PC-3 (cell line): ENCODE measurements at regions of chr4 and their contacts with region 1.

Region 1: DNA sequence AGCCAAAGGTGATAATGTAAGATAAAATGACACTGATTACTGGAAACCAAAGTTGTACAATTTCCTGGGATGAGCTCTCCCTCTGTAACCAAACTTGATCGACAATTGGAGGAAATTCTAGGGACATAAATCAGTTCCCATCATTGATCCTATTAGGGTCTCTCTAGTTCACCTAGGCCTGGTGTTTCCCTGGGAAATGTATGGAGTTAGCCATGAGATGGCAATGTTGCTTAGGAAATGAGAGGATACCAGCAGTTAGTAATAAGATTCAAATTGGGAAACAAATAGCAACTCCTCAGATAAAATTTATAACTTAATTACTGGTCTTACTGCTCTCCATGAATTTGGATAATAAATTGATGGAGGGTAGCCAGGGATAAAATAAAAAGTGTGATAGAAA is 52.2 kb downstream of the SPATA18 start:
- DNase-seq: peak; percentile 81
- ATAC-seq: peak; percentile 65
- H3K4me3 ChIP-seq: 0 out of 2 replicates have a peak overlapping the region, but pooled peaks have one; percentile 16
- H3K27ac ChIP-seq: peak overlapping the region; percentile 86
- H3K4me1 ChIP-seq: peaks cover 68% of the 10 kb centered on the region
- H3K27me3 ChIP-seq: no peaks in the 10 kb centered on the region
- CTCF ChIP-seq: peak; percentile 91

Region 2: GRCh38 chr4:51895813-51896408 is 207.4 kb before region 1 on chr4:
- CTCF ChIA-PET with region 1: no interaction called
- POLR2A ChIA-PET with region 1: no interaction called
- intact Hi-C with region 1: loop called (anchors 10 kb)
- DNase-seq: peak; percentile 80
- ATAC-seq: peak; percentile 74
- H3K4me3 ChIP-seq: no peak overlapping the region
- H3K27ac ChIP-seq: no peak overlapping the region
- H3K4me1 ChIP-seq: peaks cover 26% of the 10 kb centered on the region
- H3K27me3 ChIP-seq: no peaks in the 10 kb centered on the region
- CTCF ChIP-seq: peak; percentile 97

Region 3: GRCh38 chr4:52135171-52135570 is 31.9 kb after region 1 on chr4:
- CTCF ChIA-PET with region 1: interaction called, 3 read pairs
- POLR2A ChIA-PET with region 1: no interaction called
- intact Hi-C with region 1: loop called (anchors 1 kb)
- DNase-seq: no peak
- ATAC-seq: no peak
- H3K4me3 ChIP-seq: no peak overlapping the region
- H3K27ac ChIP-seq: no peak overlapping the region
- H3K4me1 ChIP-seq: no peaks in the 10 kb centered on the region
- H3K27me3 ChIP-seq: 0 out of 2 replicates have a peak, but pooled peaks cover 11% of the 10 kb centered on the region
- CTCF ChIP-seq: no peak

Region 4: GRCh38 chr4:52234561-52235440 is 131.5 kb after region 1 on chr4:
- CTCF ChIA-PET with region 1: no interaction called
- POLR2A ChIA-PET with region 1: no interaction called
- intact Hi-C with region 1: loop called (anchors 2 kb)
- DNase-seq: peak; percentile 91
- ATAC-seq: peak; percentile 99
- H3K4me3 ChIP-seq: peak overlapping the region; percentile 50
- H3K27ac ChIP-seq: no peak overlapping the region
- H3K4me1 ChIP-seq: 0 out of 2 replicates have a peak, but pooled peaks cover 3% of the 10 kb centered on the region
- H3K27me3 ChIP-seq: peaks cover 13% of the 10 kb centered on the region; the same call in 1 of the 2 replicates
- CTCF ChIP-seq: peak; percentile 95

Region 5: DNA sequence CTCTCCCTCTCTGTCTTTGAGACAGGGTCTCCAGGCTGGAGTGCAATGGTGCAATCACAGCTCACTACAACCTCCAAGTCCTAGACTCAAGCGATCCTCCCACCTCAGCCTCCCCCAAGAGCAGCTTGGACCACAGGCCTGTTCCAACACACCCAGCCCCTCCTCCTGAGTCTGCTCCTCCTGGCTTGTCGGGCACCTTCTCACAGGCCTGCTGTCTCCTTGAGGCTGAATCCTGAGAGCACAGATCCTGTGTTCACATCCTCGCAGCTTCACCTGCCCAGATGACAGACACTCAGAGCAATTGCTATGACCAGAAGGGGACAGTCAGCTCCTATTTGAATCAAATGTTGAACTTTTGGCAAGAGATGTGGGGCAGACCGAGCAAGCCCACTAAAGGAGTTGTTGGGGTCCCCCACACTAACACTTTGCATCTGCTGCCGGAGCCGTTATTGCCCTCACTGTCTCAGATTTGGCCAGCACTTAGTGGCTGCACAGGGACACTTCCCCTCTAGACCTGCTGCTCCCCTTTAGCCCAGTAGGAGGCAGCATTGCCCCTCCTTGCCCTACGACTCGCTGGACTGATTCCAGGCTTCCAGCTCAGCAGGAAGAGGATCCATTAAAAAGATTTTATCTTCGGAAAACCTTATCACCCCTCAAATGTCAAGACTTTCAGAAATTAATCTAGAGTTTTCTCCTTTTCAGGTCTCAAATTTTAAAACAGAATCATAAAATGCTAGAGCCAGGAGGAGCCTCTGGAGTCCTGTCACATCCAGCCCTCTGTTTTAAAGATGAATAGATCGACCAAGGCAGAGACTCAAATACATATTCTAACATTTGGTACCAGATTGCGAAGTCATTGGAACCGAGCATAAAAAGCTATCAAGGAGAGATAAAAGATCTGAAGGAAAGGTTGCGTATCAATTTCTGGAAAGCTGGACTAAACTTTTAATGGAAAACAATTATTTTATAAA is 442.1 kb after region 1 on chr4:
- CTCF ChIA-PET with region 1: no interaction called
- POLR2A ChIA-PET with region 1: no interaction called
- intact Hi-C with region 1: loop called (anchors 10 kb)
- DNase-seq: peak; percentile 90
- ATAC-seq: peak; percentile 89
- H3K4me3 ChIP-seq: peak overlapping the region; percentile 38; the same call in 1 of the 2 replicates
- H3K27ac ChIP-seq: no peak overlapping the region
- H3K4me1 ChIP-seq: peaks cover 3% of the 10 kb centered on the region; the same call in 1 of the 2 replicates
- H3K27me3 ChIP-seq: peaks cover 11% of the 10 kb centered on the region; the same call in 1 of the 2 replicates
- CTCF ChIP-seq: peak; percentile 98

Region 6: GRCh38 chr4:52712172-52712990 is 609.1 kb after region 1 on chr4:
- CTCF ChIA-PET with region 1: no interaction called
- POLR2A ChIA-PET with region 1: no interaction called
- intact Hi-C with region 1: loop called (anchors 2 kb)
- DNase-seq: peak; percentile 98
- ATAC-seq: peak; percentile 98
- H3K4me3 ChIP-seq: peak overlapping the region; percentile 82
- H3K27ac ChIP-seq: peak overlapping the region; percentile 48
- H3K4me1 ChIP-seq: peaks cover 29% of the 10 kb centered on the region
- H3K27me3 ChIP-seq: no peaks in the 10 kb centered on the region
- CTCF ChIP-seq: no peak

Region 7: DNA sequence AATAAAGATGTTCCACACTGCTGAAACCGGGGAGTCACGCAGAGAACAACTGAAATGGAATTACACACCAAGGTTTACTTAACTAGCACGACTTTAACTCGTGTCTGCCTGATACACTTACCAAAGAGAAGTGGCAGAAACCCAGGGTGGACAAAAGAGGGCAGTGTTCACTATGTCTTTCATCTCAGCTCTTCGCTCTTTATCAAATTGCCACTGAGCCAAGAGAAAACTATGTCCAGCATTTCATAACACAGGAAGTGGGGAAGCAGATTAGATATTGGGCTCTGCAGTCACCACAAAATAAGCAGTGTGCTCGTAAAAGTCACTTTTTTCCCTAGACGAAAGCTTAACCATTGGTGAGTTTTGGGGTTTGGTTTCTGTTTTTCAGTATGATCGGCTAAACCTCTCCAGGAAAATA is 1805.4 kb after region 1 on chr4:
- CTCF ChIA-PET with region 1: no interaction called
- POLR2A ChIA-PET with region 1: interaction called, 3 read pairs
- intact Hi-C with region 1: loop called (anchors 2 kb)
- DNase-seq: peak; percentile 95
- ATAC-seq: peak; percentile 85
- H3K4me3 ChIP-seq: peak overlapping the region; percentile 55
- H3K27ac ChIP-seq: peak overlapping the region; percentile 27
- H3K4me1 ChIP-seq: peaks cover 25% of the 10 kb centered on the region
- H3K27me3 ChIP-seq: no peaks in the 10 kb centered on the region
- CTCF ChIP-seq: peak; percentile 97